ENCODE measurements at regions of chr1 and their contacts with region 1.

Region 1: DNA sequence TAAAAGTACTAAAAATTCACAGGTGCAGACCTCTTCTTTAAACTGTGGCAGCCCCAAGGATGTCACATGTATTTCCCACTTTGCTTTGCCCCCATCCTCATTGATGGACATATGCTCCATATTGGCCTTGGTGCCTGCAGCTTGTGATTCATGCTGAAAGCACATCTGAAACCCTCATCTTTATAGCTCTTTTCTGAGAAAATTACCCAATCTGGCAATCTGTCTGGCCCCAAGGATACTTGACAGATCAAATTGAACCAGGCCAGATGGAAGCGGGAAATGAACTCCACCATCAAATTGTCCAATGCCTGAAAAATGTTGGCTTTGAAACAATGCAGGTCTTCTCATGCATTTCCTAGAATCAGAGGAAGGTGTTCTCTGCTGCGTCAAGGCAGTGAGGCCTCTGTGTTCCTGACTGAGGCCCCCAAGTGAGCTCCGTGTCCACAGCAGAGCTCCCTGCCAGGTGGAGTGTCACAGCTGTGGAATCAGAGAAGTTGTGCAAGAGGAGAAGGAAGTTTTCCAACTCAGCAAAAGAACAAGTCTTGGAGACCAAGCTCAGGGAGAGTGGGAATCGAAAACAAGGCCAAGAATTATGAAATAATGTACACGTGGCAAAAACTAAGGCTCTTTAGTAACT is 323.7 kb downstream of the PLPP3 start:
- DNase-seq: no peak
- H3K4me3 ChIP-seq: no peak overlapping the region
- H3K27ac ChIP-seq: no peak overlapping the region
- H3K4me1 ChIP-seq: no peaks in the 10 kb centered on the region
- H3K27me3 ChIP-seq: no peaks in the 10 kb centered on the region
- CTCF ChIP-seq: no peak
- POLR2A ChIP-seq: no peak

Region 2: GRCh38 chr1:56146449-56146848 is 109.2 kb before region 1 on chr1:
- intact Hi-C with region 1: loop called (anchors 10 kb)
- DNase-seq: peak; percentile 22
- H3K4me3 ChIP-seq: no peak overlapping the region
- H3K27ac ChIP-seq: peak overlapping the region; percentile 34 to 35
- H3K4me1 ChIP-seq: no peaks in the 10 kb centered on the region
- H3K27me3 ChIP-seq: no peaks in the 10 kb centered on the region
- CTCF ChIP-seq: no peak
- POLR2A ChIP-seq: no peak

Measured in prostate gland (tissue), 2 donors.